Vagina (tissue), 2 donors: ENCODE measurements at regions of chr1 and their contacts with region 1.

Region 1: DNA sequence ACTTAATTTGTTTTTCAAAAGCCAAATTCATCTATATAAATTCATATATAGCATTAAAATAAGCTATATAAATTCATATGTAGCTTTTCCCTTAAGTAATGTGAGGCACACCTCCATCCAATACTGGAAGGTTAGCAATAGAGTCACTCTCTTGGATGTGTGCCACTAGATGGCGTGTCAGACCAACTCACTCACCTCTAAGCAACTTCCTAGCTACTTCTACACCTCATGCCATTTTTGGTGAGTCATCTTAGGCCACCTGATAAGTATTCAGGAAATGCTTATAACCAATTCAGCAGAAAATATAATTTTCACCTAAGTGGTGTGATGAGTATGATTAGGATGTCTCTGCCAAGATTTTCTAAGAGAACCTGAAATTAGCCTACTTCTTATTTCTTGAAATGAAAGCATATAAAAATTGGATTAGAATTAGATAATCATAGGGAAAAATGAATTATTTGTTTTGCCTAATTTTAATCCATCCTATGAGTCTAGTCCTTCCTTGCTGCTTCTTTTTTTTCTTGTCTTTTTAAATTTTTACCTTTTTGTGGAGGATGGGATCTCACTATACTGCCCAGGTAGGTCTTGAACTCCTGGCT is 34.4 kb upstream of the TADA1 start:
- DNase-seq: no peak
- H3K4me3 ChIP-seq: no peak overlapping the region
- H3K27ac ChIP-seq: no peak overlapping the region
- H3K4me1 ChIP-seq: no peaks in the 10 kb centered on the region
- H3K27me3 ChIP-seq: no peaks in the 10 kb centered on the region
- CTCF ChIP-seq: peak; percentile 35 to 45 (median 45)
- POLR2A ChIP-seq: no peak

Region 2: GRCh38 chr1:166865931-166866330 is 44.6 kb before region 1 on chr1:
- intact Hi-C with region 1: no loop called
- DNase-seq: no peak
- H3K4me3 ChIP-seq: no peak overlapping the region
- H3K27ac ChIP-seq: no peak overlapping the region
- H3K4me1 ChIP-seq: peaks cover 7% of the 10 kb centered on the region
- H3K27me3 ChIP-seq: no peaks in the 10 kb centered on the region
- CTCF ChIP-seq: no peak
- POLR2A ChIP-seq: no peak

Region 3: GRCh38 chr1:167059045-167059808 is 148.7 kb after region 1 on chr1:
- intact Hi-C with region 1: loop called (anchors 10 kb)
- DNase-seq: peak in 1 of 2 donors; percentile 79
- H3K4me3 ChIP-seq: no peak overlapping the region
- H3K27ac ChIP-seq: no peak overlapping the region
- H3K4me1 ChIP-seq: peaks cover 7% of the 10 kb centered on the region
- H3K27me3 ChIP-seq: no peaks in the 10 kb centered on the region
- CTCF ChIP-seq: peak; percentile 77 to 98 (median 85)
- POLR2A ChIP-seq: no peak